Endothelial cell of umbilical vein (primary cell): ENCODE measurements at regions of chr9 and their contacts with region 1.

Region 1: DNA sequence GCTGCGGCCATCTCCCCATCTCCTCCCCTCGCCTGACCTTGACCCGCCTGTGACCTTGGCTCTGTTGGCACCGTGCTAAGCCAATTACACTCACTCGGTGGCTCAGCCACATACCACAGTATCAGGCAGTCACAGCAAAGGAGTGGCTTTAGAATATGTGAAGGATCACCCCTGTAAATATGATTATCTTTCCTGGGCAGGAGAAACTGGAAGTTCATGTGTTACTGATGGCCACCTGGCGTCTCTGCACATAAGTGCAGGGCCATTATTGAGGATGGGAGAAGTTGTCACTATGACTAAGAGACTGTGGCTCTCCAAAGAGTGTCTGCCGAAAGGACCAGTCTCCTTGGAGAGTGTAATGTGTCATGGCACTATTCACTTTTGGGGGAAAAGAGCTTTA is 116.9 kb upstream of the S1PR3 start:
- DNase-seq: no peak
- H3K4me3 ChIP-seq: no peak overlapping the region
- H3K27ac ChIP-seq: no peak overlapping the region
- H3K4me1 ChIP-seq: no peaks in the 10 kb centered on the region
- H3K27me3 ChIP-seq: no peaks in the 10 kb centered on the region
- CTCF ChIP-seq: no peak
- POLR2A ChIP-seq: no peak

Region 2: DNA sequence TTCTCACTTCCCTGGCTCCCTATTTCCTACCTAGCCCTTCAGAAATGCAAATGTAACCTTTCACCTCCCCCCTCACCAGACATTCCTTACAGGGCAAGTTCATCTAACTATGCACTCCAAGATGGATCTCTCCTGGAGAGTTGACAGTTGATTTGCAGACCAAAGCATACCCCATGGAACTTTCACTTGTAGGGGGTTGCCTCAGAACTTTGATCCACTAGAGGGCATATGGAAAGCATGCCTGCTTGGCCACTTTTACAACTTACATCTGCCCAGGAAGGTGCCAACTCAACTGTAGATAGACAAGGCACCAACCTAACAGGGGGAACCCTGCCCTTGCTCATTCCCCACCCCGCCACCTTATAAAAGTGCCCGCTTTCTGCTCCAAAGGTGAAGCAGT is 151.6 kb before region 1 on chr9:
- CTCF ChIA-PET with region 1: no interaction called
- POLR2A ChIA-PET with region 1: no interaction called
- dilution Hi-C with region 1: no loop called
- intact Hi-C with region 1: loop called (anchors 10 kb)
- DNase-seq: peak; percentile 69
- H3K4me3 ChIP-seq: no peak overlapping the region
- H3K27ac ChIP-seq: no peak overlapping the region
- H3K4me1 ChIP-seq: peaks cover 3% of the 10 kb centered on the region
- H3K27me3 ChIP-seq: no peaks in the 10 kb centered on the region
- CTCF ChIP-seq: peak; percentile 40 to 56
- POLR2A ChIP-seq: no peak

Region 3: GRCh38 chr9:88794100-88794499 is 80.3 kb before region 1 on chr9:
- CTCF ChIA-PET with region 1: no interaction called
- POLR2A ChIA-PET with region 1: no interaction called
- dilution Hi-C with region 1: no loop called
- intact Hi-C with region 1: loop called (anchors 2 kb)
- DNase-seq: peak; percentile 76
- H3K4me3 ChIP-seq: no peak overlapping the region
- H3K27ac ChIP-seq: no peak overlapping the region
- H3K4me1 ChIP-seq: peaks cover 18% of the 10 kb centered on the region
- H3K27me3 ChIP-seq: no peaks in the 10 kb centered on the region
- CTCF ChIP-seq: no peak
- POLR2A ChIP-seq: no peak

Region 4: DNA sequence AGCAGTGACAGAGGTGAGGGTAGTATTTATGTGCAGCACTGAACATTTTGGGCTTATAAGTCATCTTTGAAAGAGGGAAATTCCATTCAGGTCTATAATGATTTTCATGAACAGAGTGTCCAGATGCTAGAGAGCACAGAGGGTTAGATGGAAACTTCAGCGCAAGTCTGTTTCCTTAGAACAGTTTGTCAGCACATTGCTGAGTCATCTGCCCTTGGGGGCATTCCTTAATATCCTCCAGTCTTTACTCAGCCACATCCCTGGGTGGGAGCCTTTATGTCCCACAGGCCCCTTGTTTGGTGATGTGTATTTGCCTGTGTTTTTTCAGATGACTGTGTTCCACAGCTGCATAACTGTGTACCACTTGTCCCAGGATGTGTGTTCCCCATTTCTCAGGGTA is 21.6 kb before region 1 on chr9:
- CTCF ChIA-PET with region 1: no interaction called
- POLR2A ChIA-PET with region 1: no interaction called
- dilution Hi-C with region 1: no loop called
- intact Hi-C with region 1: no loop called
- DNase-seq: peak; percentile 92
- H3K4me3 ChIP-seq: no peak overlapping the region
- H3K27ac ChIP-seq: peak overlapping the region; percentile 69
- H3K4me1 ChIP-seq: peaks cover 11% of the 10 kb centered on the region
- H3K27me3 ChIP-seq: no peaks in the 10 kb centered on the region
- CTCF ChIP-seq: no peak
- POLR2A ChIP-seq: peak; percentile 24

Region 5: GRCh38 chr9:88980740-88981203 is 106.4 kb after region 1 on chr9:
- CTCF ChIA-PET with region 1: no interaction called
- POLR2A ChIA-PET with region 1: no interaction called
- dilution Hi-C with region 1: no loop called
- intact Hi-C with region 1: no loop called
- DNase-seq: no peak
- H3K4me3 ChIP-seq: no peak overlapping the region
- H3K27ac ChIP-seq: no peak overlapping the region
- H3K4me1 ChIP-seq: no peaks in the 10 kb centered on the region
- H3K27me3 ChIP-seq: peaks cover 3 to 12% of the 10 kb centered on the region in 2 experiments
- CTCF ChIP-seq: no peak
- POLR2A ChIP-seq: no peak